B cell (primary cell): ENCODE measurements at regions of chr1 and their contacts with region 1.

Region 1: DNA sequence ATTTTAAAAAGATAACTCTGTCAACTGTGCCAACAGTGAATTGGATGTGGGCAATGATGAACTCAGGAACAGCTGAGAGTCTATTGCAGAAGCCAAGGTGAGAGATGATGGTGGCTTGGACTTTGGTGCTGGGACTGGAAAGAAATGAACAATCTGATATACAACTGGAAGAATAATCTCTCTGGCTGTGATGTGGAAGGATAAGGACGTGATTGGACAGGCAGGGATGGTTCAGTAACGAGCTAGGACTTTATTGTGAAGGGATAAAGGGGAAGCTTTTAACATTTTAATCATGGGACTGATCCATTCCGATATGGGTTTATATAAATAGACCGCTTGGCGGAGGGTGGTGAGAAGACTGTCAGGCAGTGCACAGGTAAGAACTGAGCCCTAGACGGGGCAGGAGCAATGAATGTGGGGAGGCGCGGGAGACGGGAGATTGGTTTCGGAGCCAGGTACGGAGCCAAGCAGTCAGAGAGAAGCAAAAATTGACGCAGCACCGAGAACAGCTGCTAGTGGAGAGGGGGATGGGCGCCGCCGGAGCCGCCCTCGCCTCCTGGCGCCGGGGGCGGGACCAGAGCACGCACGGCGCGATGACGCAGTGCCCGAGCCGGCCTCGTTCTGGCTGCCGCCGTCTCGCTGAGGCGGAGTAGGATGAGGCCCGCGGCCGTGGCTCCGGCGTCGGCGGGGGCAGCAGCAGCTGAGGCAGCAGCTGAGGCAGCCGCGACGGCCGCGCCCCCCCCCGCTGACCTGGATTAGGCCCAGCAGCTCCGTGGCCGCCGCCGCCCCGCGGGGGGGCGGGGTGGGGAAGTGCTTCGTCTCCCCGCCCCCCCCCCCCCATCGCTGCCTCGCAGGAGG is at the start of gene RNF11:
- DNase-seq: peak; percentile 95
- ATAC-seq: peak; percentile 73
- H3K4me3 ChIP-seq: peak within 1 kb of the TSS; percentile 69 to 96 (median 86)
- H3K4me3 Mint-ChIP-seq: peak within 1 kb of the TSS; percentile 94
- H3K27ac ChIP-seq: peak within 1 kb of the TSS; percentile 58 to 80
- H3K27ac Mint-ChIP-seq: peak within 1 kb of the TSS; percentile 94
- H3K4me1 ChIP-seq: peaks cover 29 to 39% of the 10 kb centered on the region in 2 donors
- H3K4me1 Mint-ChIP-seq: peaks cover 34% of the 10 kb centered on the region
- H3K27me3 ChIP-seq: peaks cover 0 to 6% (median 1%) of the 10 kb centered on the region in 4 experiments
- H3K27me3 Mint-ChIP-seq: peaks cover 8% of the 10 kb centered on the region
- CTCF ChIP-seq: no peak
- total RNA-seq, gene RNF11: 17.6 and 20.6 TPM in 2 replicates

Region 2: DNA sequence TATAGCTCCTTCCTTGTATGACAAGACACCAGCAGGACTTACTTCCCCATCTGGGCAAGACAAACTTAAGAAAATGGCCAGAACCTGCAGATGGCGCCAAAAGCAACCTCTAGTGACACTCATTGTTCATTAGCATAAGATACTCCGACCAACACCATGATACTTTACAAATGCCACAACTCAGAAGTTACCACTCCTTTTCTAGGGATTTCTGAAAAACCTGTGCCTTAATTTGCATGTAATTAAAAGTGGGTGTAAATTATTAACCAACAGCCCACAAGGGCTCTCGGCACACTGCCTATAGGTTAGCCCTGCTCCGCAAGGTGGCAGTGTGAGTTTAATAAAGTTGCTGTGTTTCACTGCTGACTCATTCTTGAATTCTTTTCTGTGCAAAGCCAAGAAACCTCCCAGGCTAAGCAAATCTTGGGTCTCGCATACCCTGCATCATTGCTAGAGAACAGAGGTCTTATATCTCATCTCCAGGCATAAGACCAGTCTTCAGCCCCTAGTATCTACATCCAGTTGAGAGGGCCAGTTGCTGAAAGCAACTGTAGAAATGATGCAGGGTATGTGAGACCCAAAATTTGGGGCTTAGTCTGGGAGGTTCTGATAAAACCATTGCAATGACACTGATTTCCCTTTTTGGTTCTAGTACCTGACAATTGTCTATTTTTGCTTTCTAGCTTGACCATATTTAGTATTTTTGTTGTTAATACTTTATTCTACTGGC is 362.3 kb before region 1 on chr1:
- CTCF ChIA-PET with region 1: interaction called, 5 read pairs
- POLR2A ChIA-PET with region 1: no interaction called
- intact Hi-C with region 1: loop called (anchors 1 kb)
- DNase-seq: peak; percentile 86
- ATAC-seq: peak; percentile 88
- H3K4me3 ChIP-seq: peak overlapping the region in 2 of 5 experiments; percentile 30 to 41
- H3K4me3 Mint-ChIP-seq: peak overlapping the region; percentile 81
- H3K27ac ChIP-seq: no peak overlapping the region
- H3K27ac Mint-ChIP-seq: peak overlapping the region; percentile 68
- H3K4me1 ChIP-seq: peaks cover 0 to 3% of the 10 kb centered on the region in 2 donors
- H3K4me1 Mint-ChIP-seq: peaks cover 11% of the 10 kb centered on the region
- H3K27me3 ChIP-seq: no peaks in the 10 kb centered on the region
- H3K27me3 Mint-ChIP-seq: no peaks in the 10 kb centered on the region
- CTCF ChIP-seq: peak; percentile 91

Region 3: GRCh38 chr1:51296383-51297357 is 60.8 kb after region 1 on chr1:
- CTCF ChIA-PET with region 1: interaction called, 15 read pairs
- POLR2A ChIA-PET with region 1: no interaction called
- intact Hi-C with region 1: no loop called
- DNase-seq: peak; percentile 70
- ATAC-seq: peak; percentile 76
- H3K4me3 ChIP-seq: peak overlapping the region in 4 of 5 experiments; percentile 27 to 60 (median 46)
- H3K4me3 Mint-ChIP-seq: peak overlapping the region; percentile 60
- H3K27ac ChIP-seq: no peak overlapping the region
- H3K27ac Mint-ChIP-seq: no peak overlapping the region
- H3K4me1 ChIP-seq: peaks cover 6 to 12% of the 10 kb centered on the region in 2 donors
- H3K4me1 Mint-ChIP-seq: peaks cover 10% of the 10 kb centered on the region
- H3K27me3 ChIP-seq: peaks cover 0 to 9% (median 0%) of the 10 kb centered on the region in 4 experiments
- H3K27me3 Mint-ChIP-seq: peaks cover 10% of the 10 kb centered on the region
- CTCF ChIP-seq: peak; percentile 96